ENCODE measurements at regions of chr1 and their contacts with region 1.

Region 1: DNA sequence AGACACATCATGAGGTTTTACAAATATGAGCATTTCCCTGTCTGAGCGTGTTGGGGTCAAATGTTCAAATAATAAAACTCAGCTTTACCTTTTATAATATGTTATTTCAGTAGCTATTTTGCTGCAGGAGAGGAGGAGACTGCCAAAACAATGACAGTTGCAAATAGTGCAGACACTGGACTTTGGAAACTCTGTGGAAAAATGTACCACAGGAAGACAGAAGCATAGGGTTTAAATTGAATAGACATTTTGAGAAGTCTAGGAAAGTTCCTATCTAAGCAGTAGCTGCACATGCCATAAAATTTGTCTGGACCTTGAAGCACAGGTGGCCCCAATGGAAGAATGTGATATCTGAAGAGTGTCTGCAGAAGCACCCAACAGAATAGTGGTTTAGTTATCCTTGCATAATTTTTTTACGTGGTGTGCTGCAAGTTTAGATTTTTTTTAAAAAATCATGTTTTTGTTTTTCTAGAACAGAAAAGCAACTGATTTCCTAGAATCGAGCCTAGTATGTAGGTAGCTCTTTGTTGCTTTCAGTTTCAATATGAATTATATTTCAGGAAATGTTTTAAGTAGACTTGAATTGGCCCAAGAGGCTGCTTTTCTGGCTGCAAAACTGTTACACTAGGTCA is 14.0 kb upstream of the GBP5 start:
- DNase-seq: peak; percentile 28
- H3K4me3 Mint-ChIP-seq: peak overlapping the region; percentile 43
- H3K27ac Mint-ChIP-seq: peak overlapping the region; percentile 94
- H3K4me1 Mint-ChIP-seq: peaks cover 69% of the 10 kb centered on the region
- H3K27me3 Mint-ChIP-seq: no peaks in the 10 kb centered on the region

Region 2: DNA sequence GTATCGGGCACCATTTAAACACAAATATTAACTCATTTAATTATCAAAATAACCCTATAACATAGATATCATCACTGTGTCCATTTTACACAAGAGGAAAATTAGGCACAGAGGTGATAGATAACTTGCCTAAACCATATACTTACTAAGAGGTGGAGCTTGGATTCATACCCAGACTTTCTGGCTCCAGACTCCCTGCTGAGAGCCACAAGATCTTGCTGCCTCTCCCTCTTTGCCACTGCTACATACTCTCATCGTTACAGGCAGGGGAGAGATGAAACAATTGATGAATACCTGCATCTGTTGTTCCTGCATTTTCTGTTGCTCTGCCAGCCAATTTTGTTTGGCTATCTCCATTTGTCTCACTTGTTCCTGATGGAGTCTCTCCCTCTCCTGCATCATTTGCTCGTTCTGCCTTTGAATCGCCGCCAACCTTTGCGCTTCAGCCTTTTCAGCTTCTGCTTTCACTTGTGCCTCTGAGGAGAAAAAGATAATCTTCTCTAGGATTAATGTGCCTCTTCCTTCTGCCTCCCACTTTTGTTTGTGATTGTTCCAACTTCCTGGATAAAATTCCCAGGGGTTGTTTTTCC is 24.6 kb before region 1 on chr1:
- CTCF ChIA-PET with region 1: interaction called, 3 read pairs
- POLR2A ChIA-PET with region 1: interaction called, 14 read pairs
- DNase-seq: no peak
- H3K4me3 Mint-ChIP-seq: peak overlapping the region; percentile 34
- H3K27ac Mint-ChIP-seq: peak overlapping the region; percentile 84
- H3K4me1 Mint-ChIP-seq: peaks cover 75% of the 10 kb centered on the region
- H3K27me3 Mint-ChIP-seq: no peaks in the 10 kb centered on the region

Region 3: DNA sequence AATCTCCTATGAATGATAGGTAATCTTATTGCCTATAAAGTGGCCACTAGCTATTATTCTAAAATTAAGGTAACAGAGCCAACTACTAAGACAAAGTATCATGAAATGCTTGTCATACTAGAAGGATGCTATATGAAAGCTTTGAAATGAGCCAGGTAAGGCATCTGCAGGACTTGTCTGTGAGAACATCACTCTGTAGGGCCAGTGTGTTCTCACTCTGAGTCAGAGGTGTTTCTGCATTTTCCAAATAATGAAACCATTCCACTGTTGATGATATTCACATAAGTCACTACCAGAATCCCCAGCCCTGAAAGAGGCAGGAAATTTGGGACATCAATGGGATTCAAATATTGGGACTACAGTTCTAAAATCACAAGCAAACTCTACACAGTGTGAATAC is 11.8 kb after region 1 on chr1:
- CTCF ChIA-PET with region 1: no interaction called
- POLR2A ChIA-PET with region 1: interaction called, 26 read pairs
- DNase-seq: no peak
- H3K4me3 Mint-ChIP-seq: no peak overlapping the region
- H3K27ac Mint-ChIP-seq: no peak overlapping the region
- H3K4me1 Mint-ChIP-seq: peaks cover 59% of the 10 kb centered on the region
- H3K27me3 Mint-ChIP-seq: peaks cover 4% of the 10 kb centered on the region

Region 4: GRCh38 chr1:89310505-89310904 is 23.8 kb after region 1 on chr1:
- CTCF ChIA-PET with region 1: interaction called, 12 read pairs
- POLR2A ChIA-PET with region 1: interaction called, 66 read pairs
- DNase-seq: no peak
- H3K4me3 Mint-ChIP-seq: peak overlapping the region; percentile 26
- H3K27ac Mint-ChIP-seq: peak overlapping the region; percentile 94
- H3K4me1 Mint-ChIP-seq: peaks cover 44% of the 10 kb centered on the region
- H3K27me3 Mint-ChIP-seq: no peaks in the 10 kb centered on the region

Region 5: GRCh38 chr1:89358287-89358893 is 71.7 kb after region 1 on chr1:
- CTCF ChIA-PET with region 1: interaction called, 12 read pairs
- POLR2A ChIA-PET with region 1: interaction called, 16 read pairs
- DNase-seq: peak; percentile 86
- H3K4me3 Mint-ChIP-seq: peak overlapping the region; percentile 29
- H3K27ac Mint-ChIP-seq: no peak overlapping the region
- H3K4me1 Mint-ChIP-seq: peaks cover 47% of the 10 kb centered on the region
- H3K27me3 Mint-ChIP-seq: no peaks in the 10 kb centered on the region

Measured in activated CD4-positive, alpha-beta memory T cell treated with anti-CD3 and anti-CD28 coated beads, Interleukin-2, amount 10 ng/mL, durations not matched to agents 7 days and 5 days (primary cell).